ENCODE measurements at regions of chr12 and their contacts with region 1.

Region 1: GRCh38 chr12:53984901-53985709 is at the start of gene HOXC10:
- DNase-seq: peak; percentile 90
- H3K4me3 Mint-ChIP-seq: peak within 1 kb of the TSS; percentile 59
- H3K27ac Mint-ChIP-seq: peak within 1 kb of the TSS; percentile 81
- H3K4me1 Mint-ChIP-seq: peaks cover 24% of the 10 kb centered on the region
- H3K27me3 Mint-ChIP-seq: peaks cover 92% of the 10 kb centered on the region
- total RNA-seq, gene HOXC10: not detected in 2 replicates

Region 2: DNA sequence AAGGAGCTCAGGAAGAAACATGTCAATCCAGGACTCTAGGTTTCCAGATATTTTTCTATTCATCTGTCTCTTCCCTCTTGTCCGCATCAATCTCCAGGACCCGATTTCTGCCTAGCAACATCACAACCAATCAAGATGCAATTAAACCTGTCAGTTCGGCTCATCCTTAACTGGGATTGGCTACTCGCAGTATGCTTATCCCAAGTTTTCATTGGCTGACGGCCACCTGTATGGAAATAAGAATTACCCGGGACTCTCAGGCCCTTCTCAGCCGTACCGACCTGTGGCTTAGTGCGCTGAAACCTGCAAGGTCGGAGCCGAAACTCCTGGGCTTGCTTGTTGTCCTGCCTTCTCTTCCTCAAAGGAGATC is 288.8 kb before region 1 on chr12:
- intact Hi-C with region 1: loop called (anchors 10 kb)
- DNase-seq: no peak
- H3K4me3 Mint-ChIP-seq: no peak overlapping the region
- H3K27ac Mint-ChIP-seq: no peak overlapping the region
- H3K4me1 Mint-ChIP-seq: peaks cover 22% of the 10 kb centered on the region
- H3K27me3 Mint-ChIP-seq: peaks cover 77% of the 10 kb centered on the region

Region 3: DNA sequence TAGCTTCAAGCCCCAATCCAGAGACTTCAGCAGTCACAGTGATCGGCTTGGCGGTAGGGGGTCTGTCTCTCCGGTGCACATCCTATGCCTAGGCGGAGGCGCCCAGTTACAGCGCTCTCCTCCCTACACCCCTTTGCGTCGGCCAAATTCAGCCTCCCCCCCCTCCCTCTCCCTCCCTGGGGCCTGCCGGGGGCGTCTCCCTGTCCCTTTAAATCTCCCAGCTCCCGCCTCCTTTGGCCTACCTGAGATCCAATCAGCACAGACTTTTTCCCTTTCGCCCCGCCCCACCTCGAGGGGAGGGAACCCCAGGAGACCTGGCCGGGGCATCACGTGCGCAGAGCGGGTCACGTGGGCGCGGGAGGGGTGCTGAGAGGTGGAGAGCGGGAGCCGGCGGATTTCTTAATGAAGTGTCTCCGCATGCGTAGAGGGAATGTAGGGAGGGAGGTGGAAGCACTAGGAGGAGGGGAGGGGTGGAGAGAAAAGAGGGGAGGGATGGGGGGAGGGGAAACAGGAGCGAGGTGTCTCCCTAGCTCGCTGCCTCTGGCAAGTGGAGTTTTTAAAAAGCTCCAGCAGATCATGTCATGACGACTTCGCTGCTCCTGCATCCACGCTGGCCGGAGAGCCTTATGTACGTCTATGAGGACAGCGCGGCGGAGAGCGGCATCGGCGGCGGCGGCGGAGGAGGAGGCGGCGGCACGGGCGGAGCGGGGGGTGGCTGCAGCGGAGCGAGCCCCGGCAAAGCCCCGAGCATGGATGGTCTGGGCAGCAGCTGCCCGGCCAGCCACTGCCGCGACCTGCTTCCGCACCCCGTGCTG is 46.6 kb before region 1 on chr12 and contains the start of gene HOXC13:
- intact Hi-C with region 1: loop called (anchors 10 kb)
- DNase-seq: no peak
- H3K4me3 Mint-ChIP-seq: no peak within 1 kb of the TSS
- H3K27ac Mint-ChIP-seq: no peak within 1 kb of the TSS
- H3K4me1 Mint-ChIP-seq: peaks cover 2% of the 10 kb centered on the region
- H3K27me3 Mint-ChIP-seq: peaks cover 85% of the 10 kb centered on the region
- total RNA-seq, gene HOXC13: not detected in 2 replicates

Region 4: GRCh38 chr12:53995378-53996239 is 10.5 kb after region 1 on chr12:
- intact Hi-C with region 1: loop called (anchors 2 kb)
- DNase-seq: peak; percentile 74
- H3K4me3 Mint-ChIP-seq: peak overlapping the region; percentile 75
- H3K27ac Mint-ChIP-seq: no peak overlapping the region
- H3K4me1 Mint-ChIP-seq: peaks cover 18% of the 10 kb centered on the region
- H3K27me3 Mint-ChIP-seq: peaks cover 87% of the 10 kb centered on the region

Region 5: DNA sequence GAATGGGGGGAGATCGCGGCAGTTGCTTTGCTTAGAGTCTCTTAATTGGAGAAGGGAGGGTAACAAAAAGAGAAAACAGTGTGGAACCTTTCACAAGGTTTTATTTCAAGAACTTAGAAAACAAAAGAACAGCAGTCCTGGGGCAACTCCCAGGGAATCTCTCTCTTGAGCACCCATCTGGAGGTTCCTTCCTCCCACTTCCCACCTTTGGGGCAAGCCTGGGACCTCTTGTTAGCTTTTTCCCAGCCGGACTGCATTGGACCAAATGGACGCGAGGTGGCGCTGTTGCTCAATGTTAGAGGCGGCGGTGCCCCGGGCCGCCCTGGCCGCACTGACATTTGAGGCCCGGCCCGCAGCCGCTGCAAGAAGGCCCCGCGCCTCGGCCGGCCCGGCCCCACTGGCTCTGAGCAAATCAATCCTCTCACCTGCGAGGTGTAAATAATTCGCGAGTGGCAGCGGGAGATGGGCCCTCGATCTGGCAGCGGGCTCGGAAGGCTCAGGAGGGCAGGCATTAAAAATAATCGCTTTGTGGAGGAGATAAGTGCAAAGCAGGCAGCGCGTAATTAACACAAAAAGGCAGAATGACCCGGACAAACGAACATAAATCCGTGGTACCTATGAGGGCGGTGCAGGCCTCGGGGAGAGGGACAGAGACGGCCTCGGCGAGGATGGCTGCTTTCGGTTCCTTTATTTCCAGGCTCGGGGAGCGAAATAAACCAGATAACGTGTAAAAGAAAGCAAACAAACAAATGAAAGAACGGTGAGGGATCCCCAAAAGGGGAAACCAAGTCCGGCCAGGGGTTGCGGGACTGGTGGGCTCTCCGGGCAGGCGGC is 21.0 kb after region 1 on chr12:
- intact Hi-C with region 1: no loop called
- DNase-seq: peak; percentile 95
- H3K4me3 Mint-ChIP-seq: peak overlapping the region; percentile 85
- H3K27ac Mint-ChIP-seq: peak overlapping the region; percentile 20
- H3K4me1 Mint-ChIP-seq: peaks cover 29% of the 10 kb centered on the region
- H3K27me3 Mint-ChIP-seq: peaks cover 93% of the 10 kb centered on the region

Measured in activated CD4-positive, alpha-beta T cell treated with anti-CD3 and anti-CD28 coated beads, Interleukin-2, amount 10 ng/mL, durations not matched to agents 24 days and 14 days (primary cell).